ENCODE measurements at regions of chr1 and their contacts with region 1.

Region 1: GRCh38 chr1:234373064-234373958 is at the start of gene COA6:
- DNase-seq: peak; percentile 92
- ATAC-seq: peak; percentile 89
- H3K4me3 Mint-ChIP-seq: peak within 1 kb of the TSS; percentile 98
- H3K27ac Mint-ChIP-seq: peak within 1 kb of the TSS; percentile 99
- H3K4me1 Mint-ChIP-seq: peaks cover 56% of the 10 kb centered on the region
- H3K27me3 Mint-ChIP-seq: no peaks in the 10 kb centered on the region
- total RNA-seq, gene COA6: 56.5 to 69.5 TPM

Region 2: DNA sequence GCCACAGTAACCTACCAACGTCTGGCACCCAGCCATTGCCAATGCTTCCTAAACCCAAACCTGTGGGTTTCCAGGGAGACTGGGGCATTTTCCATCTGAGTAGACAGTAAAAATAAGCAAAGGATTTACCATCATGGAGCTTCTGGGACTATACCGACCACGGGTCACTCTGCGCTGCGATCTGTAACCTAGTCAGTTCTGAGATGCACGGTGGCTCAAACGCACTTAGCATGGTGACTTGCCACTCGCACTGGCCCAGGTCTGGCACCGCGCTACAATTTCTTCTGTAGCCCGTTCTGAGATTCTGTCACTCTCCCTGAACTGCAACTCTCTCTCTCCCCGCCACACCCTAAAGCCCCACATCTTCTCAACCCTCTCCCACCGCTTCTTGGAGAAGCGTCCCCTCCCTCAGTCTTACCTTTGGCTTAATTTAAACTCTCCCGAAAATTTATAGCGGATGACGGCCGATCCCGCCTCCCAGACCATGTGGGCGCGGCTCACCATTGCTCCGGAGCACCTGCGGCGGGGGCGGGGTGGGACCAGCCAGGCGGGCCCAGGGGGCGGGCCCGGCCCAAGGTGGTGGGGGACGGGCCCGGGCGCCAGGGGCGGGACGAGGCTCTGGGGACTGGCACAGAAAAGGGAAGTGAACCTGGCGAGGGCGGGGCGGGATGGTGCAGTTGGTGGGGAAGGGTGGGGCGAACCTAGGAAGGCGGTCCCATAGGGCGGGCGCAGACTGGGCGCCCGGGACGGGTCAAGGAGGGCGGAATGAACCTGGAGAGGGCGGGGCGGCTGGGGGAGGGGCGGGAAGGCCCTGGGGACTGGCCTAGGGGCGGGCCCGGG is 1046.3 kb before region 1 on chr1:
- CTCF ChIA-PET with region 1: no interaction called
- POLR2A ChIA-PET with region 1: no interaction called
- intact Hi-C with region 1: loop called in 1 of 2 experiments (anchors 1 kb)
- DNase-seq: peak; percentile 94
- ATAC-seq: peak; percentile 97
- H3K4me3 Mint-ChIP-seq: peak overlapping the region; percentile 69
- H3K27ac Mint-ChIP-seq: no peak overlapping the region
- H3K4me1 Mint-ChIP-seq: peaks cover 13% of the 10 kb centered on the region
- H3K27me3 Mint-ChIP-seq: peaks cover 13% of the 10 kb centered on the region

Region 3: DNA sequence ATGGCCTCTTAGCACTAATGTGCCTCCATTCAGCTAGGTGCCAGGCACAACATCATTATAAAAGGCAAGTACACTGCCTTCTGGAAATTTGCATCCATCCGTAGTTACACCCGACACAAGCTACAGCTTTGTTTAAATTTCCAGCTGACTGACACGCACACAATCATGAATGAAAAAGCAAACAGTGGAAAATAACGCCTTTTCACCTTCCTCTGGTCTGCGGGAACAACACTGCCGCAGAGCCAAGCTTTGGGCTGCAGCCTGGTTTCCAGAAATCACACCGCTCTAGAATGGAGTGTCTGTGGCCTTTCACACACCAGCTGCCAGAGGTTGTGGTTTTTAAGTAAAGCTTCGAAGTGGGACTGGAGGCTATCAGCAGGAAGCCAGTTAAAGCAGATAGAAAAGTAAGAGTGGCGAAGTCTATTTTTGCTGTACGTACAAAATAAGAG is 142.9 kb before region 1 on chr1:
- CTCF ChIA-PET with region 1: no interaction called
- POLR2A ChIA-PET with region 1: no interaction called
- intact Hi-C with region 1: no loop called
- DNase-seq: peak; percentile 41
- ATAC-seq: peak; percentile 47
- H3K4me3 Mint-ChIP-seq: no peak overlapping the region
- H3K27ac Mint-ChIP-seq: no peak overlapping the region
- H3K4me1 Mint-ChIP-seq: peaks cover 8% of the 10 kb centered on the region
- H3K27me3 Mint-ChIP-seq: peaks cover 6% of the 10 kb centered on the region

Region 4: DNA sequence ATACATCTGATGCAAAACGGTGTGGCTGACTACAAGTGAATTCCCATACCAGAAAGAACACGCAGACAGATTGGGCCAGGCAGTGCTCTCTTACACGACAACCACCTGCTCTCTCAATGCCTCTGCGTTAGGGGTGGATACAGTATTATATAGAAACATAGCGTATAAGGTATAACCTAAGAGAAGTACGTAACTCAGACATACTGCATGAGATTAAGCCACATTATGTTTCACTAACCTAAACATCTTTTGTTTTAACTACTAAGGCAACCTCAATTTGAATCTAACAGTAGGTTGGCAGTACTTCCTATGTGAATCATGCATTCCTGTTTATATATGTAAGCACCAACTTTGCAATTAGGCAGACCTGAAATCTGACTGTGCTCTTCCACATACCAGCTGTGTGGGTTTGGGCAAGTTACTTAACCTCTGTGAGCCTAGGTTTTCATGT is 58.2 kb before region 1 on chr1:
- CTCF ChIA-PET with region 1: interaction called, 3 read pairs
- POLR2A ChIA-PET with region 1: no interaction called
- intact Hi-C with region 1: loop called in 1 of 2 experiments (anchors 2 kb)
- DNase-seq: peak; percentile 56
- ATAC-seq: peak; percentile 84
- H3K4me3 Mint-ChIP-seq: peak overlapping the region; percentile 22
- H3K27ac Mint-ChIP-seq: peak overlapping the region; percentile 89
- H3K4me1 Mint-ChIP-seq: peaks cover 63% of the 10 kb centered on the region
- H3K27me3 Mint-ChIP-seq: peaks cover 1% of the 10 kb centered on the region

Region 5: GRCh38 chr1:234398849-234399381 is 25.6 kb after region 1 on chr1:
- CTCF ChIA-PET with region 1: interaction called, 4 read pairs
- POLR2A ChIA-PET with region 1: interaction called, 5 read pairs
- intact Hi-C with region 1: loop called in 1 of 2 experiments (anchors 2 kb)
- DNase-seq: no peak
- ATAC-seq: peak; percentile 73
- H3K4me3 Mint-ChIP-seq: peak overlapping the region; percentile 44
- H3K27ac Mint-ChIP-seq: peak overlapping the region; percentile 87
- H3K4me1 Mint-ChIP-seq: peaks cover 55% of the 10 kb centered on the region
- H3K27me3 Mint-ChIP-seq: no peaks in the 10 kb centered on the region

Region 6: GRCh38 chr1:234478481-234479309 is 105.4 kb after region 1 on chr1 and contains the start of gene TARBP1:
- CTCF ChIA-PET with region 1: no interaction called
- POLR2A ChIA-PET with region 1: no interaction called
- intact Hi-C with region 1: loop called (anchors 1 to 5 kb)
- DNase-seq: peak; percentile 86
- ATAC-seq: peak; percentile 81
- H3K4me3 Mint-ChIP-seq: peak within 1 kb of the TSS; percentile 82
- H3K27ac Mint-ChIP-seq: peak within 1 kb of the TSS; percentile 80
- H3K4me1 Mint-ChIP-seq: peaks cover 56% of the 10 kb centered on the region
- H3K27me3 Mint-ChIP-seq: peaks cover 16% of the 10 kb centered on the region
- total RNA-seq, gene TARBP1: 37.7 to 41.5 TPM

Region 7: GRCh38 chr1:234638832-234639799 is 265.8 kb after region 1 on chr1:
- CTCF ChIA-PET with region 1: no interaction called
- POLR2A ChIA-PET with region 1: no interaction called
- intact Hi-C with region 1: no loop called
- DNase-seq: no peak
- ATAC-seq: no peak
- H3K4me3 Mint-ChIP-seq: no peak overlapping the region
- H3K27ac Mint-ChIP-seq: no peak overlapping the region
- H3K4me1 Mint-ChIP-seq: no peaks in the 10 kb centered on the region
- H3K27me3 Mint-ChIP-seq: no peaks in the 10 kb centered on the region

Region 8: GRCh38 chr1:234823191-234824176 is 450.2 kb after region 1 on chr1:
- CTCF ChIA-PET with region 1: no interaction called
- POLR2A ChIA-PET with region 1: no interaction called
- intact Hi-C with region 1: no loop called
- DNase-seq: no peak
- ATAC-seq: no peak
- H3K4me3 Mint-ChIP-seq: no peak overlapping the region
- H3K27ac Mint-ChIP-seq: no peak overlapping the region
- H3K4me1 Mint-ChIP-seq: peaks cover 5% of the 10 kb centered on the region
- H3K27me3 Mint-ChIP-seq: no peaks in the 10 kb centered on the region

Region 9: DNA sequence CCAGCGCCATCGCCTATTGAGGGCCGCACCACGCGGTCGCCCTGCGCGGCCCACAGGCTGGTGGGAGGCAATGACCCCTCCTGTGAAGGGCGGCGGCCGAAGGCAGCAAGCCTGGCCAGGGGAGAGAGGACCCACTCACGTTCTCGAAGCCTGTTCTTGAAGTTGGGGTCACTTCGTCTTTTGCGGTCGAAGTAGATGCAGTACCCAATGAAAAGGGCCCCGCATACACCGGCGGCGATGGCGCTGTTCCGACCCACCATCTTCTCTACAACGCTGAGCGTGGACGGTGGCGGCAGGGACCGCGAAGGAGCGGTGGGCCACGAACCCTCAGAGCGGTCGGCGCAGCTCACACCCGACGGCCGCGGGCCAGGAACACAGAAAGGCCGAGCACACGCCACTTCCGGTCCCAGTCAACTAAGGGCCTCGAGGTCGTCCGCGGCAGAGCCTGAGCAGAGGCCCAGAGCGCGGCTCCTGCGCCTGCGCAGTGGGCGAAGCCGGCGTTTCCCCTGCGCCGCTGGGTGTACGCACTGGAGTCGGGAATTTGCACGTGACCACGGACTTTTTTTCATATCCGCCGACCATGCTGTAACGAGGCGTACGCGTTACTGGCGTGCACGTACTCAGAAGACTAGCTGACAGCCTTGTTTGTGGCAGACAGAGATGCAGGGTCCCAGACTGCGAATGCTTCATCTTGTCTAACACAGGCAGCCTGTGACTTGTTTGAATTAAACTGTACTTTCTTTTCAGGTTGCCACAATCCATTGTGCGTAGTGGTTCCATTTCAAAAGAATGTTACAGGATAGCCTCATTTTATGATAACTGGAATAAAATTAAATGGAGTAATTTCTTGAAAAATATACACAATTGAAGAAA is 755.4 kb after region 1 on chr1 and contains the start of gene TOMM20:
- CTCF ChIA-PET with region 1: no interaction called
- POLR2A ChIA-PET with region 1: no interaction called
- intact Hi-C with region 1: loop called in 1 of 2 experiments (anchors 1 kb)
- DNase-seq: peak; percentile 97
- ATAC-seq: peak; percentile 92
- H3K4me3 Mint-ChIP-seq: peak within 1 kb of the TSS; percentile 90
- H3K27ac Mint-ChIP-seq: peak within 1 kb of the TSS; percentile 98
- H3K4me1 Mint-ChIP-seq: peaks cover 41% of the 10 kb centered on the region
- H3K27me3 Mint-ChIP-seq: no peaks in the 10 kb centered on the region
- total RNA-seq, gene TOMM20: 62.1 to 148 TPM

Measured in activated CD4-positive, alpha-beta T cell treated with anti-CD3 and anti-CD28 coated beads for 36 hours (primary cell).